BJ (cell line): ENCODE measurements at regions of chr15 and their contacts with region 1.

Region 1: GRCh38 chr15:80512726-80513660 is 108.8 kb downstream of the ARNT2 start:
- DNase-seq: no peak
- H3K4me3 ChIP-seq: no peak overlapping the region
- H3K27me3 ChIP-seq: no peaks in the 10 kb centered on the region
- CTCF ChIP-seq: 0 out of 2 replicates have a peak, but pooled peaks have one; percentile 14

Region 2: GRCh38 chr15:80436511-80437307 is 76.3 kb before region 1 on chr15:
- CTCF ChIA-PET with region 1: no interaction called
- POLR2A ChIA-PET with region 1: no interaction called
- DNase-seq: no peak
- H3K4me3 ChIP-seq: no peak overlapping the region
- H3K27me3 ChIP-seq: no peaks in the 10 kb centered on the region
- CTCF ChIP-seq: no peak

Region 3: DNA sequence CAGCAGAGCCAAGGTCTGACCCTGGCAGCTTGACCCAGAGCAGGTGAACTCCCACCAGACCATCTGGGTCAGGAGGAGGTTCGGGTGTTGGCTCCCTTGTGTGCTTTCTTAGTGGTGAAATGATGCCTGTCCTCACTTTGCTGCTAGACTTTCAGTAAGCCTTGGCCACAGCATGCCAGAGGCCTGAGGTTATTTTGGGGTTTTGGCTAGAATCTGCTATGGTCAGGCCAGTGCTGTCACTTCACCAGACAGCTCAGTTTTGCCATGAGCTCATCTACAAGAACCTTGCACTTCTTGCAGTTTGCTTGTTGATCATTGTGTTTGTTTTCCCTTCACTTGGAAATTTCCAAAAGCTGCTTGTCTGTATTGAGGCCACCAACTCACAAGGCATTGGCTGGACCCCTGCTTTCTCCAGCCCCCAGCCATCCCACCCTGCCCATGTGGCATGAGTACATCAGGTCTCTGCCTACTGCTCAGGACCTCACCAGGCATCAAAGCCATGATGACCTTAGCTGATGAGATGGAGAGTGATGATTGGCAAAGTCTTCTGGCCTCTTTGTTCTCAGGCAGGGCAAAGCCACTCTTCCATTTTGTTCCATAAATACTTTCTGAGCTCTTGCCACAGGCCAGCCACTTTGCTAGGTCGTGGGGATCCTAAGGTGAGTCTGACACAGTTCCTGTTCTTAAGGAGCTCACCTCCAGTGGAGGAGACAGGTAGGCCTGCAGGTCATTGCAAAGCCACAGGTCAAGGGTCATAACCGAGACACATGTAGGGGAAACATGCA is 13.8 kb after region 1 on chr15:
- CTCF ChIA-PET with region 1: interaction called, 7 read pairs
- POLR2A ChIA-PET with region 1: interaction called, 10 read pairs
- DNase-seq: peak; percentile 81
- H3K4me3 ChIP-seq: no peak overlapping the region
- H3K27me3 ChIP-seq: no peaks in the 10 kb centered on the region
- CTCF ChIP-seq: no peak